ENCODE measurements at regions of chr7 and their contacts with region 1.

Region 1: DNA sequence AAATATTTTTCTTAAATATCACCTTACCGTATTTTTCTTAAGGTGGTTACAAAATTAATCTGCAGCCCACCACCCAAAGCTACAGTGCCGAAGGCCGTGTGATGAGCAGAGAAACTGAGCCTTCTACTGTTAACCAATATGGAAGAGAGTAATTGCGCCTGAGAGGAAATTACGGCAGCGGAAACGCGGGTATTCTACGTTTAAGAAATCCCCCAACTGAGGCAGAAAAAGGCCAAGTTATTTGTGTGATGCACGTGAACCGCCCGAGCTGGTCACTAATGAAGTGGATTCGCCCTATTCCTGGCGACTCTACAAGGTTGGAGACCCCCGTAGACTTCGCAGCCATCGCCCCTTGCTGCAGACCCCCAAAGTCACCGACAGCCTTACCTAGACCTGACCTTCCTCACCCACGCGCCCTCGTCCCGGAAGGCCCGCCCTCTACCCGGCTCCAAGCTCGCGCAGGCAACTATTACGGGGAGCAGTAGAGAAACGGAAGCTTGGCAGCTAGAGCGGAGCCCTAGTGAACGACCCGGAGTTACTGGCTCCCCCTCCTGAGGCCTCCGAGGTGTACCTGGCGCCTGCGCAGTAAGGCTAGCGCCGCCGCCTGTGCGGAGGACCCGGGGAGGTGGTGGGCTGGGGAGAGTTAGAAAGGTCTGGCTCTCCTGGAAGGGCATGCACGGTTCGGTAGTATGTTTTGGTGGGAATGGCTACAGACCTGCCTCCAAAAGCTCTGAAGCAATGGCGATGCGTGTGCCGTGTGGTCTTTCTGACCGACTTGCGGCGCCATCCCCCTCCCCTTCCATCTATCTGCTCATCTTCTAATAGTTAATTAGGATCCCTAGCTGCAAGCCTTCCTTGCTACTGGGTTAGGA is at the start of gene MRPS33:
- DNase-seq: peak; percentile 93
- H3K4me3 Mint-ChIP-seq: peak within 1 kb of the TSS; percentile 97
- H3K27ac Mint-ChIP-seq: peak within 1 kb of the TSS; percentile 100
- H3K4me1 Mint-ChIP-seq: peaks cover 31% of the 10 kb centered on the region
- H3K27me3 Mint-ChIP-seq: peaks cover 21% of the 10 kb centered on the region
- total RNA-seq, gene MRPS33: 67.4 and 70.0 TPM in 2 replicates

Region 2: DNA sequence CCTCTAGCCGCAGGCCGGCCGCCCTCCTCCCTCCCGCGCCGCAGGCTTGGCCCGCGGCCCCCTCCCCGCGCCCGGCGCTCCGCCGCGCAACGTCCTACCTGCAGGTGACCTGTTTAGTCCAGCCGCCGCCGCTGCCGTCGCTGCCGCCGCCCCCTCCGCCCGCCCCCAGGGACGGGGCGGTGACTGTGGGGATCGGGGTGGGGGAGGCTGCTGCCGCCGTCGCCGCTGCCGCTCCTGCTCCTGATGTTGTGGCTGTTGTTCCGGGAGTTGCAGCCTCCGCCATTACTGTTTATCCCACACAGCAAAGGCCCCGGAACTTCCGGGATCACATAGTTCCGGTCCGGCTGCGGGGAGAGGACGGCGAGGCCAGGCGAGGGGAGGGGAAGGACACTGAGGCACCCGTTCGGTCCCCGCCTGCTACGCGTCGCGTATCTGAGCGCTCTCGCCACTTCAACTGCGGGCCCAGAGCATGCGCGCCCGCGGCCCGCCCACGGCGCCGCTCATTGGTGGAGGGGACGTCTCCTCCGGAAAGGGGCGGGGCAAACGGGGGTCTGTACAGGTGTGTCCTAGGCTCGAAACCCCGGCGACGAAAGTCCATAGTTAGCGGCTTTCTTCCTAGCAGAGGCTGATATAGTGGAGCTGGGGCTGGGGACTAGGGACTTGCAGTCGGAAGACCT is 535.6 kb before region 1 on chr7 and contains the start of gene MKRN1:
- intact Hi-C with region 1: loop called (anchors 2 kb)
- DNase-seq: peak; percentile 89
- H3K4me3 Mint-ChIP-seq: peak within 1 kb of the TSS; percentile 97
- H3K27ac Mint-ChIP-seq: peak within 1 kb of the TSS; percentile 96
- H3K4me1 Mint-ChIP-seq: peaks cover 25% of the 10 kb centered on the region
- H3K27me3 Mint-ChIP-seq: no peaks in the 10 kb centered on the region
- total RNA-seq, gene MKRN1: 72.9 and 73.6 TPM in 2 replicates

Region 3: DNA sequence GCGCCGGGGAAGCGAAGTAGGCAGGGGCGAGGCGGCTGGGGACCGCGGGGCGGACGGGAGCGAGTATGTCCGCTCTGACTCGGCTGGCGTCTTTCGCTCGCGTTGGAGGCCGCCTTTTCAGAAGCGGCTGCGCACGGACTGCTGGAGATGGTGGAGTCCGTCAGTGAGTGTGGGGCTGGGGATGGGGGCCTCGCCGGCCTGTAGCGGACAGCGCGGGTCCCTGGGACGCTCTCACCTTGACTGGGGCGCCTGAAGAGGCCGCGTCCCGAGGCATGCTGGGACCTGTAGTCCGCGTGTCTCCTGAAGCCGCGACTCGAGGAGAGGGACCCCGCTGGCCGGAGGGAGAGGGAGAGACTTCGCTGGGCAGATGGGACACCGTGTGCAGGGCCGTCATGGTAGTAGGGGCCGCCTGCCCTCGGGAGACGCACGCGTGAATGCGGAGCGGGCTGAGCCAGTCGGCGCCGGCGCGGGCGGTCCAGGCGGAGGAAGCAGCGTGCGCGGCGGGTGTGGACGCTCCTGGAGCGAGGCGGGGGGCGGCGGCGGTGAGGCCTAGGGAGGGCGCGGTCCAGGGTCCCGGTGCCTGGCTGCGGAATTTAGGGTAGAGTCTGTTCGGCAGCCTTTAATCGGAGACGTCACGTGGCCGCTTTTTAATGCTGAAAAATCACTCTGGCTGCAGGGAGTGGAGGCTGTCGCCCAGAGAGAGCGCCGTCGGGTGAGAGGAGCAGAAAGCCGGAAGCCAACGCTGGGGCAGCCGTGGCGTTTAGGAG is 317.9 kb before region 1 on chr7 and contains the start of gene NDUFB2:
- intact Hi-C with region 1: loop called (anchors 2 kb)
- DNase-seq: peak; percentile 86
- H3K4me3 Mint-ChIP-seq: peak within 1 kb of the TSS; percentile 99
- H3K27ac Mint-ChIP-seq: peak within 1 kb of the TSS; percentile 99
- H3K4me1 Mint-ChIP-seq: peaks cover 26% of the 10 kb centered on the region
- H3K27me3 Mint-ChIP-seq: no peaks in the 10 kb centered on the region
- total RNA-seq, gene NDUFB2: 172 and 178 TPM in 2 replicates

Region 4: GRCh38 chr7:140924019-140924820 is 90.5 kb before region 1 on chr7:
- intact Hi-C with region 1: loop called (anchors 1 kb)
- DNase-seq: peak; percentile 62
- H3K4me3 Mint-ChIP-seq: no peak overlapping the region
- H3K27ac Mint-ChIP-seq: no peak overlapping the region
- H3K4me1 Mint-ChIP-seq: peaks cover 8% of the 10 kb centered on the region
- H3K27me3 Mint-ChIP-seq: peaks cover 2% of the 10 kb centered on the region

Region 5: DNA sequence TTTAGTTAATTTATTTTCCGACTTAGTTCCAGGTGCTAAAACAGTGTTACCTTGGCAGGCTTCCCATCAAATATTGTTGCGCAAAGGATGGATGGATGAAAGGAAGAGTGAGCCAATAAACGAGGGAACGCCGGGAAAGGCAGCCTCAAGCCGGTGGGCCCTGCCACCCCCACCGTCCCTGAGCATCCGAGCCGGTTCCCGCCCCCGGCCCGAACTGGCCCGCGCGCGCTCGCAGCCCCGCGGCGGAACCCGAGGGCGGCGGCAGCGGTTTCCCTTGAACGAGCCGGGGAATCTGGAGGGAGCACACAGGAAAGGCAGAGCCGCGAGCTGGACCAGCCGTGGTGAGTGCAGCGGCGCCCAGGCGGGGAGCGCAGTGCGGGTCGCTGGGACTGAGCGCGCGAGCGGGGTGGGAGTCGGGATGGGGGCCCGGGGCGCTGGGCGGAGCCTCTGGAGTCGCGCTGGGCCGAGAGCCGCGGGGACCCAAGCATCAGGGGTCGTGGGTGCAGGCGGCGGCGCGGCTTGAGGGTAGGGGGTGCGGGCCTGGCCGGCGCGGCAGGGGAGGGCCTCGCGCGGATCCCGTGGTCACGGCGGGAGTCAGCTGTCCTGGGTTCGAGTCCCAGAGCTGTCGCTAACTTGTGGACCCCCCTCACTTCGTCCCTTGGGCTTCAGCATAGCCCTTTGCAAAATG is 536.5 kb after region 1 on chr7 and contains the start of gene AGK:
- intact Hi-C with region 1: loop called (anchors 10 kb)
- DNase-seq: peak; percentile 75
- H3K4me3 Mint-ChIP-seq: peak within 1 kb of the TSS; percentile 92
- H3K27ac Mint-ChIP-seq: peak within 1 kb of the TSS; percentile 97
- H3K4me1 Mint-ChIP-seq: peaks cover 41% of the 10 kb centered on the region
- H3K27me3 Mint-ChIP-seq: no peaks in the 10 kb centered on the region
- total RNA-seq, gene AGK: 144 and 147 TPM in 2 replicates

Region 6: GRCh38 chr7:141654551-141654950 is 639.8 kb after region 1 on chr7:
- intact Hi-C with region 1: loop called (anchors 10 kb)
- DNase-seq: peak; percentile 40
- H3K4me3 Mint-ChIP-seq: no peak overlapping the region
- H3K27ac Mint-ChIP-seq: peak overlapping the region; percentile 51
- H3K4me1 Mint-ChIP-seq: peaks cover 6% of the 10 kb centered on the region
- H3K27me3 Mint-ChIP-seq: no peaks in the 10 kb centered on the region

Region 7: DNA sequence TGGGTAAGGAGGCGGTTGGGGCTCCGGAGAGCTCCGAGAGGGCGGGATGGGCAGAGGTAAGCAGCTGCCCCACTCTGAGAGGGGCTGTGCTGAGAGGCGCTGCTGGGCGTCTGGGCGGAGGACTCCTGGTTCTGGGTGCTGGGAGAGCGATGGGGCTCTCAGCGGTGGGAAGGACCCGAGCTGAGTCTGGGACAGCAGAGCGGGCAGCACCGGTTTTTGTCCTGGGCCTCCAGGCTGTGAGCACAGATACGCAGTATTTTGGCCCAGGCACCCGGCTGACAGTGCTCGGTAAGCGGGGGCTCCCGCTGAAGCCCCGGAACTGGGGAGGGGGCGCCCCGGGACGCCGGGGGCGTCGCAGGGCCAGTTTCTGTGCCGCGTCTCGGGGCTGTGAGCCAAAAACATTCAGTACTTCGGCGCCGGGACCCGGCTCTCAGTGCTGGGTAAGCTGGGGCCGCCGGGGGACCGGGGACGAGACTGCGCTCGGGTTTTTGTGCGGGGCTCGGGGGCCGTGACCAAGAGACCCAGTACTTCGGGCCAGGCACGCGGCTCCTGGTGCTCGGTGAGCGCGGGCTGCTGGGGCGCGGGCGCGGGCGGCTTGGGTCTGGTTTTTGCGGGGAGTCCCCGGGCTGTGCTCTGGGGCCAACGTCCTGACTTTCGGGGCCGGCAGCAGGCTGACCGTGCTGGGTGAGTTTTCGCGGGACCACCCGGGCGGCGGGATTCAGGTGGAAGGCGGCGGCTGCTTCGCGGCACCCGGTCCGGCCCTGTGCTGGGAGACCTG is 1782.0 kb after region 1 on chr7:
- intact Hi-C with region 1: loop called (anchors 10 kb)
- DNase-seq: no peak
- H3K4me3 Mint-ChIP-seq: peak overlapping the region; percentile 95
- H3K27ac Mint-ChIP-seq: peak overlapping the region; percentile 99
- H3K4me1 Mint-ChIP-seq: peaks cover 64% of the 10 kb centered on the region
- H3K27me3 Mint-ChIP-seq: no peaks in the 10 kb centered on the region

Measured in activated T-helper 2 cell treated with anti-CD3 and anti-CD28 coated beads, Interferon-gamma antibody, Interleukin-2, Interleukin-4, amounts not matched to agents 10 μg/mL and 5 μg/mL and 100 μg/mL, durations not matched to agents 14 hours and 24 hours and 36 hours (primary cell).